OCI-LY7 (cell line): ENCODE measurements at regions of chr12 and their contacts with region 1.

Region 1: DNA sequence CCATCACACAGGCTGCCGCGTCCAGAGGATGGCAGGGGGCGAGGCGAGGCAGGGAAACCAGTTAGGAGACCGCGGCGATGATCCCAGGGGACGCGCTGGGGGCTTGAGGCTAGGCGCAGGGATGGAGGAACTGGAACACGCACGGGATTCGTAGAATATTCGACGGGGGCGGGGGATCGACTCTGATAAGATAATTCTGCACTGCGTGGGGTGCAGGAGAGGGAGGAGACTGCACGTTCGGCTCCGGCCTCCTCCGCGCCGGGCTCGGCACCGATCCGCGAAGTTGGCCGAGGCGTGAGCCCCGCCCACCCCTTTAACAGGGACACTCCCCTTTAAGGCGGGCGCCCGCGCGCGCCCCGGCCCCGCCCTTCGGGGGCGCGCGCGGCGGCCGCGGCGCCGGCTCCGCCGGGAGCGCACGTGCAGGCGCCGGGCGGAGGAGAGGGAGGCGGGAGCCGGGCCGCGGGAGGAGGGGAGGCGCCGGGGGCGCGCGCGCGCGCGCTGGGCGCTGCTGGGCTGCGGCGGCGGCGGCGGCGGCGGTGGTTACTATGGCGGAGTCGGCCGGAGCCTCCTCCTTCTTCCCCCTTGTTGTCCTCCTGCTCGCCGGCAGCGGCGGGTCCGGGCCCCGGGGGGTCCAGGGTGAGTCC is at the start of gene ACVR1B:
- DNase-seq: peak; percentile 92
- H3K4me3 ChIP-seq: peak within 1 kb of the TSS; percentile 98
- H3K27ac ChIP-seq: no peak within 1 kb of the TSS
- H3K4me1 ChIP-seq: peaks cover 18% of the 10 kb centered on the region
- CTCF ChIP-seq: no peak
- total RNA-seq, gene ACVR1B: 3.0 and 4.1 TPM in 2 replicates

Region 2: DNA sequence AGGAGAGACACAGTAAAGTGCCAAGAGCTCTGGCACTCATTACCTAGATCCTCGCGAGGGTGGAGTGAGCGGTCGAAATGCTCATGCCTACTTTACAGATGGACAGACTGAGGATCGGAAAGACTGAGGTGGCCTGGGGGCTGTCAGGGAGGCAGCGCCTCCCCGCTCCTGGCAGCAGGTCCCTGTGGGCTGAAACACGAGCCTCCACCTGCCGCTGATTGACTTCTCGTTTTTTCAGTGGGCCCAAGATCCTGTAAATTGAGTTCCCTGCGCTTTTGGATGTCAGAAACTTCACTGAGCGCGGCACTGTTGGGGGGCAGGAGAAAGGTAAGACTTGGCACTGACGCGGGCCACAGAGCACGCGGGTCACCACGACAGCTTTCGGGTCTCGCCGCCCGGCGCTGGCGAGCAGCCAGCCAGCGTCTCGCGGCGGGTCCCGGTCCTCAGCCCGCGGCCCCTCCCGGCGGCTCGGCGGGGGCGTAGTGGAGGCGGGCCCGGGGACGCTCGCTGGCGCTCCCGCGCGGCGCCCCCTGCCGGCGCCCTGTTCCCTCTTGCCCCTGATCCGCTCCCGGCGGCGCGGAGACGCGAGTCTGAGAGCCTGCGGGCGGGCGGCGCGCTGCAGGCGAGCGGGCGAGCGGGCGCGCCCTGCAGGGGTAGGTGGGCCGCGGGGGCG is 360.8 kb before region 1 on chr12:
- CTCF ChIA-PET with region 1: no interaction called
- POLR2A ChIA-PET with region 1: no interaction called
- intact Hi-C with region 1: loop called (anchors 2 kb)
- DNase-seq: peak; percentile 90
- H3K4me3 ChIP-seq: peak overlapping the region; percentile 66
- H3K27ac ChIP-seq: no peak overlapping the region
- H3K4me1 ChIP-seq: peaks cover 8% of the 10 kb centered on the region
- CTCF ChIP-seq: no peak; the same call in 1 of the 2 replicates